ENCODE measurements at regions of chr6 and their contacts with region 1.

Region 1: GRCh38 chr6:137341681-137342195 is 122.6 kb upstream of the IFNGR1 start:
- DNase-seq: peak; percentile 47
- H3K4me3 ChIP-seq: no peak overlapping the region
- H3K27ac ChIP-seq: no peak overlapping the region
- H3K4me1 ChIP-seq: peaks cover 23% of the 10 kb centered on the region
- CTCF ChIP-seq: peak; percentile 77

Region 2: DNA sequence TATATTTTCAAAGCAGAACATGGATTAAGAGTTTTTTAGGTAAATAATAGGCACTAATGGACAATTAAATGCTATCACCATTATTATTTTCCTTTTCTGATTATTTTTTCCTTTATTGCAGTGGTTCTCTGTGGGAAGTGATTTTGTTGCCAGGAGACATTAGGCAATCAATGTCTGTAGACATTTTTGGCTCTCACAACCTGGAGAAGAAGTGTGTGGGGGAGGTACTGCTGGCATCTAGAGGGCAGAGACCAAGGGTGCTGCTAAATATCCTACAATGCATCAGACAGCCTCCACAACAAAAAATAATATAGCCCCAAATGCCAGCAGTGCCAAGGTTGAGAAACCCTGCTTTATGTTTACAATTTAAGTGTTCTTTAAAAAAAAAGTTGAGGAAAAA is 130.8 kb before region 1 on chr6:
- CTCF ChIA-PET with region 1: no interaction called
- POLR2A ChIA-PET with region 1: no interaction called
- intact Hi-C with region 1: no loop called
- DNase-seq: no peak
- H3K4me3 ChIP-seq: no peak overlapping the region
- H3K27ac ChIP-seq: no peak overlapping the region
- H3K4me1 ChIP-seq: peaks cover 16% of the 10 kb centered on the region
- CTCF ChIP-seq: no peak

Region 3: GRCh38 chr6:137415127-137415833 is 73.5 kb after region 1 on chr6:
- CTCF ChIA-PET with region 1: no interaction called
- POLR2A ChIA-PET with region 1: no interaction called
- intact Hi-C with region 1: loop called (anchors 5 kb)
- DNase-seq: peak; percentile 66
- H3K4me3 ChIP-seq: no peak overlapping the region
- H3K27ac ChIP-seq: no peak overlapping the region
- H3K4me1 ChIP-seq: peaks cover 24% of the 10 kb centered on the region
- CTCF ChIP-seq: peak; percentile 84

Region 4: GRCh38 chr6:137432054-137432611 is 90.4 kb after region 1 on chr6:
- CTCF ChIA-PET with region 1: no interaction called
- POLR2A ChIA-PET with region 1: interaction called, 4 read pairs
- intact Hi-C with region 1: loop called (anchors 5 kb)
- DNase-seq: peak; percentile 68
- H3K4me3 ChIP-seq: peak overlapping the region; percentile 54
- H3K27ac ChIP-seq: peak overlapping the region; percentile 74
- H3K4me1 ChIP-seq: peaks cover 47% of the 10 kb centered on the region
- CTCF ChIP-seq: no peak

Region 5: DNA sequence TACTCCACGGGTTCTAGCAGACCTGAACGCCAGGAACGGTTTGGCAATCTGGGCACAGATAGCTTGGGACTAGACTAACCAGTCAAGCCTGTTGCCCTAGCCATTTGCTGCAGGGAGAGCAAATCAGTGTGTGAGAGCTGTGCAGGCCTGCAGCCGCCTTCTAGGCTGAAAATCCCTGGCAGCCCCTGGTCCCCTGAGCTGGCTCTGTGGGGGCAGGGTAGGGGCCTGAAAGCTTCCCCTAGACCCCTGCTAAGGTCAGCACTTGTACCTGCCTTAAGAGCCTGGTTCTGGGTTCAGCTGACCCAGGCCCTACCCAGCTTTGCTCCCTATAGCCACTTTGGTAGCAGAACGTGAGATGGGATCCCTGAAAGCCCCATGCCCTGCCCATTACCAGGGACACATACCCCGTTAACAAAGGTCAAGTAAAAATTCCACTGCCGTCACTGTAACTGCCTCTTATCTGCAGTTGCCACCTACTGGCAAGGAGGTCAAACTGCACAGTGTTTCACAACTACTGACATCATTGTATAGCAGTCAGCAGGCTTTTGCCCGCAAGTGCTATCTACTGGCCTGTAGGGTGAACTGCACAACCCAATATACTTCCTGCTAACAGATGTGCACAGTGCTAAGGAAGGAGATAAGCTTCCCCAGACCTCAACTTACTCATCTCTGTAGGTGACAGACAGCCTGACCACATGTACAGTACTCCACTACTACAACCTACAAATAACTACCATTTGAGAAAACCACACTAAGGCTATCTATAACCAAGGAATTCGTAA is 247.5 kb after region 1 on chr6:
- CTCF ChIA-PET with region 1: no interaction called
- POLR2A ChIA-PET with region 1: interaction called, 6 read pairs
- intact Hi-C with region 1: loop called (anchors 1 kb)
- DNase-seq: peak; percentile 81
- H3K4me3 ChIP-seq: no peak overlapping the region
- H3K27ac ChIP-seq: no peak overlapping the region
- H3K4me1 ChIP-seq: no peaks in the 10 kb centered on the region
- CTCF ChIP-seq: peak; percentile 95

Region 6: GRCh38 chr6:137776786-137777686 is 435.3 kb after region 1 on chr6:
- CTCF ChIA-PET with region 1: no interaction called
- POLR2A ChIA-PET with region 1: no interaction called
- intact Hi-C with region 1: no loop called
- DNase-seq: no peak
- H3K4me3 ChIP-seq: no peak overlapping the region
- H3K27ac ChIP-seq: no peak overlapping the region
- H3K4me1 ChIP-seq: no peaks in the 10 kb centered on the region
- CTCF ChIP-seq: no peak

Measured in OCI-LY7 (cell line).